Panc1 (cell line): ENCODE measurements at regions of chr11 and their contacts with region 1.

Region 1: GRCh38 chr11:2151500-2152257 is 9.3 kb downstream of the INS start:
- DNase-seq: peak; percentile 83
- ATAC-seq: peak; percentile 52
- H3K4me3 ChIP-seq: no peak overlapping the region
- H3K27ac ChIP-seq: no peak overlapping the region
- H3K4me1 ChIP-seq: peaks cover 15% of the 10 kb centered on the region
- H3K27me3 ChIP-seq: peaks cover 10% of the 10 kb centered on the region
- CTCF ChIP-seq: peak; percentile 96

Region 2: DNA sequence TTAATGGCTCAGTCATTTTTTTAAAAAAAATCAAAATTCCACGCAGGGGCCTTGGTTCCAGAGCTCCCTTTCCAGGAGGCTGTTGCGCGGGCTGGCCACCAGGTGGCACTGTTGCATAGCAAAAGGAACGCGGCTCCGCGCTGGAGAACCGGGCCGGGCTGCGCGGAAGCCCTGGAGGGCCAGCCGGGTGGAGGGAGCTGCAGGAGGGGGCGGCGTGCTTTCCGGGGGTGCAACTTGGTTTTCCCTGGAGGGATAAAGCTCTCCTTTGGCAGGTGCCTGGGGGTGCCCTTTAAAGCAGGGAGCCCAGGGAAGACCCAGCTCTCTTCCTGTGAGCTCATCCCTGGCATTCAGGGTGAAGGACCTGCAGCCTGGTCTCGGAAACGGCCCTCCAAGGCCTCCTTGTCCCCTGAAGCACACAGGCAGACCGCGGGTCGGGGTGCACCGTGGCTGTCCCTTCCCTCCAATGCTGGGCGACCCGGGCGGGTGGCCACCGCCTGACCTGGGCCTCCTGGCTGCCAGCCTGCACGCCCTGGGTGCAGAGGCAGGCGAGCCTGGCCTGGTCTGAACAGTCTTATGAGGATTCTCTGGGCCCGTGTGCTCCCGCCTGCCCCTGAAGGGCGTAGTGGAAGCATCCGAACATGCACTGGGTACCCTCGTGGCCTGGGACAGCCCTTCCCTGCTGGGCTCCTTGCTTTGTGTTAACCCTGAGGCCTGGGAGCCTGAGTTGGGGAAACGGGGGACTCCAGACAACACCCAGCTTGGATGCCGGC is 498.7 kb before region 1 on chr11:
- CTCF ChIA-PET with region 1: interaction called, 26 read pairs
- POLR2A ChIA-PET with region 1: no interaction called
- in situ Hi-C with region 1: no loop called
- intact Hi-C with region 1: loop called (anchors 5 kb)
- DNase-seq: no peak
- ATAC-seq: peak; percentile 88
- H3K4me3 ChIP-seq: no peak overlapping the region
- H3K27ac ChIP-seq: no peak overlapping the region
- H3K4me1 ChIP-seq: 0 out of 2 replicates have a peak, but pooled peaks cover 2% of the 10 kb centered on the region
- H3K27me3 ChIP-seq: no peaks in the 10 kb centered on the region
- CTCF ChIP-seq: peak; percentile 99

Region 3: DNA sequence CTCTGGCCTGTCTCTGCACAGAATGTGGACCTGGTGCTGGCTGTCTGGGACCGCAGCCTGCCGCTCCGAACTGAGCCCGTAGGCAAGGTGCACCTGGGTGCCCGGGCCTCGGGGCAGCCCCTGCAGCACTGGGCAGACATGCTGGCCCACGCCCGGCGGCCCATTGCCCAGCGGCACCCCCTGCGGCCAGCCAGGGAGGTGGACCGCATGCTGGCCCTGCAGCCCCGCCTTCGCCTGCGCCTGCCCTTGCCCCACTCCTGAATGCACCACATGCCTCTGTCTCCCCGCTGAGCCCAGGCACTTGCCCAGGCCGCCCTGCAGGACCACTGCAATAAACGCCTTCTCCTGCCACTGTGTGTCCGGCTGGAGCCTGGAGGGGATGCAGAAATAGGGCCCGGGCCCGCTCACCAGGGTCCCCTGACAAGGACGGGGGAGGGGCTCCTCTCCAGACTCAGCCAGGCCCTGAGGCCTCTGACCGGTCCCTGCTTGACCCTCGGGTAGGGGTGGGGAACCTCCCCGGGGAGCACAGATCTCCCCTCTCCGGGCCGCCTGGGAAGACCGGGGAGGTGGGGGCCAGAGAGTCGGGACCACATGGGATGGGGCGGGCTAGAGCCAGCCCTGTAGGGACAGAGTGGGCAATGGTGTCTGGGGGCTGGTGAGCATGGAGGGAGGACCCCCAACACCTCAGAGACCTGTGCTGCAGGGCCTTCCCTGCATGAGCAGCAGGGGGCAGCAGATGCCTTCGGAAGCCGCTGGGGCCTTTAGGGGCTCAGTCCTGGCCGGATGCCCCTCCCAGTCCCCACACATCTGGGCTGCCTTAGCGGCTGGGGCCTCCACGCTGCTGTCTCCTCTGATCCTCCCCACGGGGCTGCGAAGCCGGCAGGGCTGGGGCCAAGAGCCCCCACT is 314.3 kb before region 1 on chr11:
- CTCF ChIA-PET with region 1: interaction called, 12 read pairs
- POLR2A ChIA-PET with region 1: no interaction called
- in situ Hi-C with region 1: no loop called
- intact Hi-C with region 1: no loop called
- DNase-seq: no peak
- ATAC-seq: peak; percentile 72
- H3K4me3 ChIP-seq: no peak overlapping the region
- H3K27ac ChIP-seq: no peak overlapping the region
- H3K4me1 ChIP-seq: peaks cover 42% of the 10 kb centered on the region
- H3K27me3 ChIP-seq: no peaks in the 10 kb centered on the region
- CTCF ChIP-seq: peak; percentile 99

Region 4: GRCh38 chr11:1988667-1989317 is 162.9 kb before region 1 on chr11:
- CTCF ChIA-PET with region 1: no interaction called
- POLR2A ChIA-PET with region 1: interaction called, 13 read pairs
- in situ Hi-C with region 1: no loop called
- intact Hi-C with region 1: no loop called
- DNase-seq: no peak
- ATAC-seq: no peak
- H3K4me3 ChIP-seq: no peak overlapping the region
- H3K27ac ChIP-seq: no peak overlapping the region
- H3K4me1 ChIP-seq: no peaks in the 10 kb centered on the region
- H3K27me3 ChIP-seq: no peaks in the 10 kb centered on the region
- CTCF ChIP-seq: no peak

Region 5: GRCh38 chr11:2036863-2037486 is 114.7 kb before region 1 on chr11:
- CTCF ChIA-PET with region 1: interaction called, 236 read pairs
- POLR2A ChIA-PET with region 1: no interaction called
- in situ Hi-C with region 1: no loop called
- intact Hi-C with region 1: no loop called
- DNase-seq: no peak
- ATAC-seq: peak; percentile 80
- H3K4me3 ChIP-seq: no peak overlapping the region
- H3K27ac ChIP-seq: no peak overlapping the region
- H3K4me1 ChIP-seq: no peaks in the 10 kb centered on the region
- H3K27me3 ChIP-seq: no peaks in the 10 kb centered on the region
- CTCF ChIP-seq: no peak

Region 6: GRCh38 chr11:2164861-2165555 is 13.3 kb after region 1 on chr11:
- CTCF ChIA-PET with region 1: interaction called, 10 read pairs
- POLR2A ChIA-PET with region 1: interaction called, 3 read pairs
- in situ Hi-C with region 1: no loop called
- intact Hi-C with region 1: no loop called
- DNase-seq: no peak
- ATAC-seq: no peak
- H3K4me3 ChIP-seq: no peak overlapping the region
- H3K27ac ChIP-seq: no peak overlapping the region
- H3K4me1 ChIP-seq: peaks cover 8% of the 10 kb centered on the region; the same call in 1 of the 2 replicates
- H3K27me3 ChIP-seq: no peaks in the 10 kb centered on the region
- CTCF ChIP-seq: no peak